ENCODE measurements at regions of chr11 and their contacts with region 1.

Region 1: DNA sequence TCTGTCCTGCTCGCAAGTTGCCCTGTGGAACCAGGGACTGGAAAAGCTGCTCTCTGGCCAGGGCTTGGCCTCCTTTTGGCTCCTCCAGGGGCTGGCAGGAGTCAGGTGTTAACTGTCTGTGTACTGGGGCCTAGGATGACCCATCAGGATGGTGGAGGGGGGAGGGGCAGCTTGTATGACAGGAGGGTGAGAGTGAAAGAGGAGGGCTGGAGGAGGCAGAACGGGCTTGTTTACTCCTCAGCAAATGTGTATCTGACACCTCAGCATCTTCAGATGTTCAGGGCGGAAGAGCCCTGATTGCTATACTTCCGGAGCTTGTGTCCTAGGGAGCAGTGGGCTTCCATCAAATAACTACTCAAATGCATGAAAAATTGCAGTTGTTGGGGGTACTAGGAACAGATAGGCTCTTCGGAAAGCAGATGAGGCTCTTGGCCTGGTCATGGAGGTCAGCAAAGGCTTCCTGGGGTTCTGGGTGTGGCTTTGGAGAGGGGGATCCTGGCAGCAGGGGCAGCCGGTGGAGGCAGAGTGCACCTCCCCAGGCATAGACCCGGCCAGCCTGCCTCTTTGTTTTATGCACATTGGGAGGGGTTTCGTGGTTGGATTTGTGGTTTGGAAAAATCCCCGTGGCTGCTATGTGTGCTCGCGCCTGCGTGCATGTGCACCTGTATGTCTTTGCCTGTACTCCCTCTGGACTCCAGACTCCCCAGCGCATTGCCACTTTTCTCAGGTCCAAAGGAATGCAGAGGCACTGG is 31.2 kb downstream of the CD82 start:
- DNase-seq: peak; percentile 89
- H3K4me3 Mint-ChIP-seq: peak overlapping the region; percentile 39
- H3K27ac Mint-ChIP-seq: peak overlapping the region; percentile 88
- H3K4me1 Mint-ChIP-seq: peaks cover 81% of the 10 kb centered on the region
- H3K27me3 Mint-ChIP-seq: no peaks in the 10 kb centered on the region

Region 2: DNA sequence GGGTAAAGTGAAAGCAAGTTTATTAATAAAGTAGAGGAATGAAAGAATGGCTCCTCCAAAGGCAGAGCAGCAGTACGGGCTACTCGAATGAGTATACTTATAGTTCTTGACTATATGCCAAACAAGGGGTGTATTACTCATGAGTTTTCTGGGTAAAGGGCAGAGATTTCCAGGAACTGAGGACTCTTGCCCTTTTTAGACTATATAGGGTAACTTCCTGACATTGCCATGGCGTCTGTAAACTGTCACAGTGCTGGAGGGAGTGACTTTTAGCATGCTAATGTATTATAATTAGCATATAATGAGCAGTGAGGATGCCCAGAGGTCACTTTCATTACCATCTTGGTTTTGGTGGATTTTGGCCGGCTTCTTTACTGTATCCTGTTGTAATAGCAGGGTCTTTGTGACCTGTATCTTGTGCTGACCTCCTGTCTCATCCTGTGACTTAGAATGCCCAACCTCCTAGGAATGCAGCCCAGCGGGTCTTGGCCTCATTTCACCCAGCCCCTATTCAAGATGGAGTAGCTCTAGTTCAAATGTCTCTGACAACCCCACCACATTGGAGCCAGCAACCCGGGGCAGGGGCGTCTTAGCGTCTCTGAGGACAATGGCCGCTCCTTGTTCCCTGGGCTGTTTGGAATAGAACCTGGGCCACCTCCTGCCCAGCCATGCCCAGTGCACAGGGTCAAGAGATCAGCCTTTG is 66.1 kb before region 1 on chr11:
- CTCF ChIA-PET with region 1: no interaction called
- intact Hi-C with region 1: no loop called
- DNase-seq: peak; percentile 70
- H3K4me3 Mint-ChIP-seq: no peak overlapping the region
- H3K27ac Mint-ChIP-seq: peak overlapping the region; percentile 82
- H3K4me1 Mint-ChIP-seq: peaks cover 37% of the 10 kb centered on the region
- H3K27me3 Mint-ChIP-seq: no peaks in the 10 kb centered on the region

Region 3: GRCh38 chr11:44574610-44575287 is 22.0 kb before region 1 on chr11:
- CTCF ChIA-PET with region 1: interaction called, 4 read pairs
- intact Hi-C with region 1: loop called (anchors 1 kb)
- DNase-seq: peak; percentile 84
- H3K4me3 Mint-ChIP-seq: peak overlapping the region; percentile 68
- H3K27ac Mint-ChIP-seq: peak overlapping the region; percentile 96
- H3K4me1 Mint-ChIP-seq: peaks cover 93% of the 10 kb centered on the region
- H3K27me3 Mint-ChIP-seq: no peaks in the 10 kb centered on the region

Region 4: GRCh38 chr11:44611687-44612434 is 15.2 kb after region 1 on chr11:
- CTCF ChIA-PET with region 1: interaction called, 11 read pairs
- intact Hi-C with region 1: loop called (anchors 1 kb)
- DNase-seq: peak; percentile 78
- H3K4me3 Mint-ChIP-seq: no peak overlapping the region
- H3K27ac Mint-ChIP-seq: peak overlapping the region; percentile 71
- H3K4me1 Mint-ChIP-seq: peaks cover 82% of the 10 kb centered on the region
- H3K27me3 Mint-ChIP-seq: no peaks in the 10 kb centered on the region

Measured in activated naive CD4-positive, alpha-beta T cell treated with anti-CD3 and anti-CD28 coated beads for 36 hours (primary cell).